AG04450 (cell line): ENCODE measurements at regions of chr19 and their contacts with region 1.

Region 1: GRCh38 chr19:34639491-34640085 is 37.4 kb downstream of the SCGB2B2 start:
- DNase-seq: peak; percentile 20
- H3K4me3 ChIP-seq: no peak overlapping the region
- H3K27ac ChIP-seq: no peak overlapping the region
- H3K27me3 ChIP-seq: no peaks in the 10 kb centered on the region
- CTCF ChIP-seq: peak; percentile 77

Region 2: GRCh38 chr19:34654796-34655195 is 15.2 kb after region 1 on chr19:
- CTCF ChIA-PET with region 1: interaction called, 22 read pairs
- POLR2A ChIA-PET with region 1: no interaction called
- DNase-seq: no peak
- H3K4me3 ChIP-seq: no peak overlapping the region
- H3K27ac ChIP-seq: no peak overlapping the region
- H3K27me3 ChIP-seq: no peaks in the 10 kb centered on the region
- CTCF ChIP-seq: no peak

Region 3: GRCh38 chr19:34712395-34713261 is 73.0 kb after region 1 on chr19:
- CTCF ChIA-PET with region 1: interaction called, 85 read pairs
- POLR2A ChIA-PET with region 1: no interaction called
- DNase-seq: peak; percentile 66
- H3K4me3 ChIP-seq: no peak overlapping the region
- H3K27ac ChIP-seq: no peak overlapping the region
- H3K27me3 ChIP-seq: no peaks in the 10 kb centered on the region
- CTCF ChIP-seq: peak; percentile 67

Region 4: DNA sequence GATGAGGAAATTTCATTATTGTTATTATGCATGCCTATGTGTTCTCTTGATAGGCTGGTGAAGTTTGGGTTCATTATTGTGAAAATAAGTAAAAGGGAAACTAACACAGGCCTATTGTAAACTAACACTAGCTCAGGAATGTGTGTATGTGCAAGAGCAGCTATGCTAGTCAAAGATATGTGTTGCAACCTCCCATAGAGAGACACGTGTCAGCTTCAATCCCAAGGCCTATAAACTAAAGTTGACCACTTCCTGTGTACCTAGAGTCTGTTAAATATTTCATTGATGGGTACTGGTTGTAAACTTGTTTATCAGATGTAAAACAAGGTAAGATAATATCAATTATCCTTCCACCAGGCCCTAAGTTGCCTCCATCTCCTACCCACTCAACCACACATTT is 242.4 kb after region 1 on chr19:
- CTCF ChIA-PET with region 1: no interaction called
- POLR2A ChIA-PET with region 1: no interaction called
- DNase-seq: no peak
- H3K4me3 ChIP-seq: no peak overlapping the region
- H3K27ac ChIP-seq: no peak overlapping the region
- H3K27me3 ChIP-seq: no peaks in the 10 kb centered on the region
- CTCF ChIP-seq: no peak

Region 5: DNA sequence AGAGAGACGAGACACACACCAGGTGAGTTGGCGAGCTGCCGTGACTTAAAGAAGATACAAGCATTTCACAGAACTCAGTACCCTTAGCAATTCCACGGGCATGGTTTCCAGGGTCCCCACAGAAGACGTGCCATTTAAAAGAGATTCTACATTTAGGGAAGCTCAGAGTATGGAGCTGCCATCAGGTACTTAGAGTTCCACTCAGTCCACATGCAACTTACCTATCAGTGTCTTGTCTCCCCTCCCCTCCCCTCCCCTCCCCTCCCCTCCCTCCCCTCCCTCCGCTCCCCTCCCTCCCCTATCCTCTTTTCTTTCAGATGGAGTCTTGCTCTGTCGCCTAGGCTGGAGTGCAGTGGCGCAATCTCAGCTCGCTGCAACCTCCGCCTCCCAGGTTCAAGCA is 299.3 kb after region 1 on chr19:
- CTCF ChIA-PET with region 1: interaction called, 10 read pairs
- POLR2A ChIA-PET with region 1: no interaction called
- DNase-seq: no peak
- H3K4me3 ChIP-seq: no peak overlapping the region
- H3K27ac ChIP-seq: no peak overlapping the region
- H3K27me3 ChIP-seq: no peaks in the 10 kb centered on the region
- CTCF ChIP-seq: no peak